Activated CD8-positive, alpha-beta T cell treated with anti-CD3 and anti-CD28 coated beads for 36 hours (primary cell): ENCODE measurements at regions of chr11 and their contacts with region 1.

Region 1: GRCh38 chr11:77127232-77127911 is 674 bp upstream of the MYO7A start:
- DNase-seq: peak; percentile 74
- ATAC-seq: peak; percentile 83
- H3K4me3 Mint-ChIP-seq: peak overlapping the region; percentile 37
- H3K27ac Mint-ChIP-seq: no peak overlapping the region
- H3K4me1 Mint-ChIP-seq: peaks cover 5% of the 10 kb centered on the region
- H3K27me3 Mint-ChIP-seq: peaks cover 4% of the 10 kb centered on the region
- CTCF ChIP-seq: peak; percentile 100

Region 2: DNA sequence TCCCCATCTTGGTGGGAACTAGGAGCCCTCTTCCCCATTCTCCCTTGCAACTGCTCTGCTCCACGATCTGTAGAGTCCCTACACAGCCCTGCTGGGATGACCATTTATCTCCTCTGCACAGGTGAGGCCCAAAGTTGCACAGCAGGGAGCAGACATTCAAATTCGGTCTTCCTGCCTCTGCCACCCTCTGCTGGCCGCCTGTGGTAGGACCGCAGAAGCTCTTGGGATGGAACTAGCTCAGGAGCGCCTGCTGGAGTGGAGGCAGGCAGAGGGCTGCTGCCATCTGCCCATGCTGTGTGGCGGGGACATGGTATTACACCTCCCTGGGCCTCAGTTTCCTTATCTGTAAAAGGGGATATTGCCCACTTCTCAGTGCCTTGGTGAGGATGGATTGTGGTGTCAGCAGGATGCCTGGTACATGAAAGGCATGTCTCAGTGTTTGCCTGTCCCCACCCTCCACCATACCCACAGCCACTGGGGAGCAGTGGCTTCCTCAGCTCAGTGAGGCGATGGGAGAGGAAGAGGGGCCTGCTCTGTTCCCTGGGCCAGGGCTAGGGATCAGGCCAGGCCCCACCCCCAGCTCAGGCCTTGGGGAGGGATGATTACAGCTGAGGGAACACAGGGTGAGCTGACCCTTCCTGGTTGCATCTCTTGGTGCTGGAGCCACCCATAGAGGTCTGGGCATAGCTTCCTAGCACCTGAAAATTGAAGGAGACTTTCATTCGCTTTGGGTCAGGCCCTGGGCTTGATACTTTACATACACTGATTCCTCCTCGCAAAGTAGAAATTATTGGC is 36.0 kb before region 1 on chr11:
- CTCF ChIA-PET with region 1: interaction called, 20 read pairs
- POLR2A ChIA-PET with region 1: no interaction called
- intact Hi-C with region 1: no loop called
- DNase-seq: peak; percentile 92
- ATAC-seq: peak; percentile 100
- H3K4me3 Mint-ChIP-seq: no peak overlapping the region
- H3K27ac Mint-ChIP-seq: no peak overlapping the region
- H3K4me1 Mint-ChIP-seq: peaks cover 5% of the 10 kb centered on the region
- H3K27me3 Mint-ChIP-seq: no peaks in the 10 kb centered on the region
- CTCF ChIP-seq: peak; percentile 75

Region 3: DNA sequence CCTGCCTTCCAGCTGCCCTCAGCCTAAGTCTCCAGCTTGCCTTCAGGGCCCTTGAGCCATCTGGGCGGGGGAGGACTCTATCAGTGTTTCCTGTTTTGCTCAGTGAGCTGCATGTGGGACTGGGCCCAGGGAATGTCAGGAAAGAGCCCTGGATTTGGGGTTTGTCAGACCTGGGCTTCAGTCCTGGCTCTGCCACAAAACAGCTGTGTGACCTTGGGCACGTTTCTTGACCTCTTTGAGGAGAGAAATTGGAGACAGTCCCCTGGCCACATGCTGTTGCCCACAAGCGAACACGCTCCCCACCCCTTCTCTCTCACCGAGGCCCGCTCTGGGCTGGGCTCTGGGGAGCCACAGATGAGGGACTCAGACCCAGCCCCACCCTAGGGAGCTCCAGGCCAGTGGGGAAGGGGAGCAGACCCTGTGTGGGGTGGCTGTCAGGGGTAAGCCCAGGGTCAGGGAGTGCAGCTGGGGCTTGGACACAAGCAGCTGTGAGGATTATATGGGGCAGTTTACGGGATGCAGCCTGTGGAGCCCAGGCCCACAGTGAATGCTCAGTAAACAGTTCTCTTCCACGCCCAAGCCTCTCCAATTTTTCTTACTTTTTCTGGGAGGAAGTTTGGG is 13.0 kb after region 1 on chr11:
- CTCF ChIA-PET with region 1: interaction called, 27 read pairs
- POLR2A ChIA-PET with region 1: no interaction called
- intact Hi-C with region 1: no loop called
- DNase-seq: no peak
- ATAC-seq: no peak
- H3K4me3 Mint-ChIP-seq: no peak overlapping the region
- H3K27ac Mint-ChIP-seq: no peak overlapping the region
- H3K4me1 Mint-ChIP-seq: peaks cover 23% of the 10 kb centered on the region
- H3K27me3 Mint-ChIP-seq: peaks cover 6% of the 10 kb centered on the region
- CTCF ChIP-seq: no peak

Region 4: GRCh38 chr11:77170107-77170506 is 42.7 kb after region 1 on chr11:
- CTCF ChIA-PET with region 1: interaction called, 12 read pairs
- POLR2A ChIA-PET with region 1: no interaction called
- intact Hi-C with region 1: no loop called
- DNase-seq: no peak
- ATAC-seq: no peak
- H3K4me3 Mint-ChIP-seq: no peak overlapping the region
- H3K27ac Mint-ChIP-seq: no peak overlapping the region
- H3K4me1 Mint-ChIP-seq: no peaks in the 10 kb centered on the region
- H3K27me3 Mint-ChIP-seq: no peaks in the 10 kb centered on the region
- CTCF ChIP-seq: no peak

Region 5: GRCh38 chr11:77187776-77188632 is 60.6 kb after region 1 on chr11:
- CTCF ChIA-PET with region 1: interaction called, 176 read pairs
- POLR2A ChIA-PET with region 1: no interaction called
- intact Hi-C with region 1: loop called (anchors 1 kb)
- DNase-seq: peak; percentile 89
- ATAC-seq: peak; percentile 77
- H3K4me3 Mint-ChIP-seq: no peak overlapping the region
- H3K27ac Mint-ChIP-seq: no peak overlapping the region
- H3K4me1 Mint-ChIP-seq: no peaks in the 10 kb centered on the region
- H3K27me3 Mint-ChIP-seq: no peaks in the 10 kb centered on the region
- CTCF ChIP-seq: peak; percentile 86

Region 6: DNA sequence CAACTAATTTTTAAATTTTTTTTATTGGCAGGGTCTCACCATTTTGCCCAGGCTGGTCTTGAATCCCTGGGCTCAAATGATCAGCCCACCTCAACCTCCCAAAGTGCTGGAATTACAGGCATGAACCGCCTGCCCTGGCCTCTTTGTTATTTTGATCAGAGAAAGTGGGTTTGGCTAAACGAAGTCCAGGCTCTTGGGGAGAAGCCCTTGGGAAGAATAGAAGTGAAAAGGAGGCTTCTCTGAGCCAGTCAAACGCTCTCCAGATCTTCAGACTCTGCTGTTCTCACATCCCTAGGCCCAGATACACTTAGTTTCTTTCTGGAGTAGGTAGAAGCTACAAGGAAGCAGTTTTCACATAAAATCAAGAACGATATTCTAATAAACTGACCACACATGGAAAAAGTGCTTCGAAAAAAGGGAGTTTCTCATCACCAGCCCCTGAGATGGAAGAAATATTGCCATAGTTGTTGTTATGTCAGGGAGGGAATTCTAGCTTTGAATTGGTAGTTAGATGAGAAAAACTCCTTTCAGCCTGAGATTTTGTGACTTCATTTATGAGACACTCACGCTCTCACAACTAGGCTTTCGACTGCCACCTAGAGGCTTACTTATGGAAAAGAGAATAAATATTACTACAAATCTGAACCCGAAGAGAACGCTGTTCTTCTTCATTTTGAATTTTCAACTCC is 420.6 kb after region 1 on chr11:
- CTCF ChIA-PET with region 1: interaction called, 21 read pairs
- POLR2A ChIA-PET with region 1: no interaction called
- intact Hi-C with region 1: loop called (anchors 10 kb)
- DNase-seq: peak; percentile 51
- ATAC-seq: no peak
- H3K4me3 Mint-ChIP-seq: no peak overlapping the region
- H3K27ac Mint-ChIP-seq: no peak overlapping the region
- H3K4me1 Mint-ChIP-seq: peaks cover 4% of the 10 kb centered on the region
- H3K27me3 Mint-ChIP-seq: no peaks in the 10 kb centered on the region
- CTCF ChIP-seq: peak; percentile 72